ENCODE measurements at regions of chr15 and their contacts with region 1.

Region 1: DNA sequence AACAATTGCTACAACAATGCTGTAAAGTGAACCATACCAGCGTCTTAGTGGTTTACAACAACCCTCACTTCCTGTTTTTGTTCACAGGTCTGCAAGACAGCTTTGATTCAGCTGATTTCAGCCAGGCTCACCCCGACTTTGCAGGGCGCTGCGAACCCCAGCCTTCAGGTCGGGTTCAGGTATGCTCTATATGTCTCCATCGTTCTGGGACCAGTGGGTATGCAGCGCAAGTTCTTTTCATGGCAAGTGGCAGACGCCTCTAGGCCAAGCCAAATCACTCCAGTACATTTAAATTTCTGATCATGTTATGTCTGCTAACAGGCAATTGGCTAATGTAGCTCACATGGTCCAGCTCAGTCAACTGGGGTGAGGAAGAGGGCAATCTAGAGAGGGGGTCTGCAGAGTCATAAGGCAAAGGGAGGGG is 52.4 kb upstream of the RGMA start:
- DNase-seq: no peak
- H3K4me3 ChIP-seq: no peak overlapping the region
- H3K27ac ChIP-seq: no peak overlapping the region
- H3K4me1 ChIP-seq: peaks cover 0 to 20% (median 16%) of the 10 kb centered on the region in 4 donors
- H3K27me3 ChIP-seq: no peaks in the 10 kb centered on the region
- CTCF ChIP-seq: no peak
- EP300 ChIP-seq: no peak
- POLR2A ChIP-seq: no peak

Region 2: DNA sequence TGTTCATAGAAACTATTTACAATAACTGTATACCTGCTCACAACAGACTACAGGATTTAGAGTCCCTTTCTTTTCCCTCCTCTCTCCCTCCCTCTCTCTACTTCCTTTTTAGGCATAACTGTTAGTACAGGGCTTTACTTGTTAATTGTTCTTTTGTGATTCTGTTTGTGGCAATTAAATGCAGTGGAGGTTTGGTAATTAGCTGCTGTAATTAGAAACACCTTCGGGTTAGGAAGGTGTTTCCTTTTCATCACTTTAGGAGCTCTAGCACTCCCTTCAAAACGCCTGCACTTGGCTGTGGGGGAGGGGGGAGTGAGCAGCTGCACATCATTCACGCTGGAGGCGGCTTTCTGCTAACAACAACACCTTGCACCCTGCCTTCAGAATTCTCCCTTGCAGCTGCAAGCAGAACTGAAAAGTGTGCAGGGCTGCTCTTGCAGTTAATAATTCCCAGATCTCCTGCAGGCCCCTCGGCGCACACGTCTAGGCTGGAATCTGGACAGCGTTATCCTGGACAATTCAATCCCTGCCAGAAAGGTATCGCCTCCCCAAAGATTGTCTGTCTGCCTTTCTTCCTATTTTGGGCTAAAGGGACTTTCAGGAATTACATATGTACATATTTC is 190.3 kb after region 1 on chr15:
- intact Hi-C with region 1: loop called (anchors 10 kb)
- DNase-seq: peak; percentile 73
- H3K4me3 ChIP-seq: no peak overlapping the region
- H3K27ac ChIP-seq: peak overlapping the region in 2 of 4 donors; percentile 60 to 65
- H3K4me1 ChIP-seq: peaks cover 0 to 28% (median 18%) of the 10 kb centered on the region in 4 donors
- H3K27me3 ChIP-seq: no peaks in the 10 kb centered on the region
- CTCF ChIP-seq: no peak
- EP300 ChIP-seq: peak in 1 of 4 donors; percentile 59
- POLR2A ChIP-seq: no peak